Activated naive CD4-positive, alpha-beta T cell treated with anti-CD3 and anti-CD28 coated beads, Interleukin-2, amount 10 ng/mL, durations not matched to agents 7 days and 5 days (primary cell): ENCODE measurements at regions of chr1 and their contacts with region 1.

Region 1: DNA sequence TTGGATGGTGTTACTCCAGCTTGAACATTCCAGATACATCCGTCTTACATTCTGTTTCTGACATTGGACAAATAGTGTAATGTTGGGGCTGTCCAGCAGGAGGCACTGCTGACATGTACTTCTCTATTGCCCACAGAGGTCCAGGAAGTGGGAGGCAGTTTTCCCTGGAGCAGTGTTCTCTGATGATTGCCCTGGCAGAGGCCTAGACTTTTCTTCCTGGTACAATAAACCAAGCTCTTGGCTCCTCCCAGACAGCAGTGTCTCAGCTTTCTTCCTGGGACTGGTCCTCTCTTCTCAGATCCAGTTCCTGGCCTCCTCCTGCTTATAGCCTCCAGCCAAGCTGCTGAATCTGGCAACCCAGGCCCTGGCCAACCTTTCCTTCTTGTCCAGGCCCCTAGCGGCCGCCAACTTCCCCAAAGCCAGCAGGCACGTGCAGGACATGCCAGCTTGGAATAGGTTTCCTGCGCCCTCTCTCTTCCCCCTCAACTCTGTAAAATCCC is 14.9 kb upstream of the IFNLR1 start:
- DNase-seq: peak; percentile 77
- H3K4me3 Mint-ChIP-seq: no peak overlapping the region
- H3K27ac Mint-ChIP-seq: no peak overlapping the region
- H3K4me1 Mint-ChIP-seq: peaks cover 11% of the 10 kb centered on the region
- H3K27me3 Mint-ChIP-seq: peaks cover 27% of the 10 kb centered on the region

Region 2: DNA sequence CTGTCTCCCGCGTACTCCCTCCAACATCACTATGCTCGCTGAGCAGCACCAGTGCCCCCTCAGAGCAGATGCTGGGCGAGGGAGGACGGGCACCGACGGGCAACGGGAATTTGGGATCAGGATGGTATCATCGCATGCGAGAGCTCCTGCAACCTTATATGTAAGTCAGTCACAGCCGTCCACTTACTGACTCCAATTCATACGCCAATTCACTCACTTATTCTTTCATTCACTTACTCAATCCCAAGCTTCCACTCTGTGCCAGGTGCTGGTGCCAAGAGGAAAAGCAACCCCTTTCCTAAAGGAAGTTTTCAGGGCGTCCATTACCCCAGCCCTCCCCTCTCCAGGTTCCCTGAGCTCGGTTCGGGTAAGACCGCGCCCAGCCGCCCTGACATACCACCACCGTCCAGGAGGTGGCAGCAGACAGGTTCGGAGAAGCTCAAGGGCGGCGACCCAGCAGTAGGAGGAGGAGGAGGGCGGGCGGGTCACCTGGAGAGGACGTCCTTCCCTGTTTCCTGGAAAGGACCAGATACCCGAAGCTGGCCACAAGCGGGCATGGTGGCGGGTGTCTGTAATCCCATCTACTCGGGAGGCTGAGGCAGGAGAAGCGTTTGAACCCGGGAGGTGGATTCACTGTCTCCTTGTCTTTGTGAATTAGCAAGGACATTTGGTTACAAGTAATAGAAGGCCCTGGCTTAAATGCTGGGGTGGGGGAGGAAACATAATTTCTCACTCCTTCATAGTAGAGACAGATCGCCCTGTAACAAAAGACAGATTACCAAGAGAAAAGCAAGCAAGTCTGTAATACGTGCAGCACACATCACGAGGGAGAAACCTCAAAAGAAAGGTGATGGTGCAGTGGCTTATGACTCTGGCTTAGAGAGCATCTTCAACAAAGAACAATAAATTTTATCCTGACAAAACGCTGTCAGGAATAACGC is 51.5 kb before region 1 on chr1:
- CTCF ChIA-PET with region 1: interaction called, 85 read pairs
- DNase-seq: peak; percentile 93
- H3K4me3 Mint-ChIP-seq: peak overlapping the region; percentile 10
- H3K27ac Mint-ChIP-seq: no peak overlapping the region
- H3K4me1 Mint-ChIP-seq: peaks cover 19% of the 10 kb centered on the region
- H3K27me3 Mint-ChIP-seq: peaks cover 65% of the 10 kb centered on the region

Region 3: DNA sequence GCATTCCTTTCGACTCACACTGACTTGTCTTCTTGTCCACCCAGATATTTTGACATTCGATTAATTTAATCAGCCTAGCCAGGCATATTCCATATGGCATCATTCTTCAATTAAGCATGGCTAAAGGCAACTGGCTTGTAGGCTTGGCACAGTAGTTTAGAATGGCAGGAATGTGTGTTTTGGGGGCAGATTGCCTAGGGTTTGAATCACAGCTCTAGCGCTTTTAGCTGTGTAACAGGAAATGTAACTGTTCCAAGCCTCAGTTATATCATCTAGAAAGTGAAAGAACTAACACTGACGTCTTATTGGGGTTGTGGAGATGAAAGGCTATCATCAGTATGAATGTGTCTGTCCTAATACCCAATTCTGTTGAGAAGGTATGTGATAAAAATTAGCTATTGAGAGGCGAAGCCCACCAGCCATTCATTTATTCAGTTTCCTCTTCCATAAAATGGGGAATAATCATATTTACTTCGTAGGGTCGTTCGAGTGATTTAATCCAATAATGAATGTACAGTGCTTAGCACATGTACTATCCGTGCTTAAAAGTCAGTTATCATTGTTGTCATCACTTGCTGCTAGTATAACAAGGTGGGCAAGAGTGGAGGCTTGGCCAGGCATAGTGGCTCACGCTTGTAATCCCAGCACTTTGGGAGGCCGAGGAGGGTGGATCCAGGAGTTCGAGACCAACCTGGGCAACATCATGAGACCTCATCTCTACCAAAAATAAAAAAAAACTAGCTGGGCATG is 75.6 kb after region 1 on chr1:
- CTCF ChIA-PET with region 1: interaction called, 11 read pairs
- DNase-seq: no peak
- H3K4me3 Mint-ChIP-seq: no peak overlapping the region
- H3K27ac Mint-ChIP-seq: no peak overlapping the region
- H3K4me1 Mint-ChIP-seq: peaks cover 14% of the 10 kb centered on the region
- H3K27me3 Mint-ChIP-seq: peaks cover 46% of the 10 kb centered on the region

Region 4: DNA sequence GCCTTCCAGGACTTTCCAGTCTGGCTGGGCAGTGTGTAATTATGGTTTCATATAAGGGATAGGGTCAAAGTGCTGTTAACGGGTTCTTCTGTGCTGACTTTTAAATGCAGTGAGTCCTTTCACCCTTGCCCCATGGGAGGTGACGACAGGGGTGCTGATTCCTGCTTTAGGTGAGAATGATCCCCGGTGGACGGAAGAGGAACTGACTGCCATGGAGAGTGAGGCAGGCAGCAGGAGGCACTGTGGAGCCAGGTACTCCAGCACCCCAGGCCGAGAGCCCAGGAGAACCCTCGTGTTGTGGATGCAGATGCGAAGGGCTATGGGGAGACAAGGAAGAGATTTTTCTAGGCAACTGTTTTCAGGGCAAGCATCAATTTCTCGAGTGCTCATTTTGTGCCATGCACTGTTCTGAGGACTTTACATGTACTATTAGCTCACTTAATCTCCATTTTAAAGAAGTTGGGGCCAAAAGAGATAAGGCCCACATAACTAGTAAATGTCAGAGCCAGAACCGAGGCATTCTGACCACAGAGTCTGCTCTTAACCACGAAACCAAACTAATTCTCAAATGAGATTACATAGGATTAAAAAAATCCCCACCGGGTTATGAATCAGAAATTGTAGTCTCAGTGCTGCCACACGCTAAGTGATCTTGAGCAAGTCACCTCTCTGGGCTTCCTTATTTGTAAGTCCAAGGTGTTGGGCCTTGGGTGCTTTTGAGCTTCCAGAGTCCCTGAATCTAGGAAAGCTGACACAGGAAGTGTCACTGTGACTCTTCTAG is 183.4 kb after region 1 on chr1:
- CTCF ChIA-PET with region 1: interaction called, 383 read pairs
- DNase-seq: peak; percentile 50
- H3K4me3 Mint-ChIP-seq: no peak overlapping the region
- H3K27ac Mint-ChIP-seq: peak overlapping the region; percentile 30
- H3K4me1 Mint-ChIP-seq: peaks cover 28% of the 10 kb centered on the region
- H3K27me3 Mint-ChIP-seq: no peaks in the 10 kb centered on the region

Region 5: DNA sequence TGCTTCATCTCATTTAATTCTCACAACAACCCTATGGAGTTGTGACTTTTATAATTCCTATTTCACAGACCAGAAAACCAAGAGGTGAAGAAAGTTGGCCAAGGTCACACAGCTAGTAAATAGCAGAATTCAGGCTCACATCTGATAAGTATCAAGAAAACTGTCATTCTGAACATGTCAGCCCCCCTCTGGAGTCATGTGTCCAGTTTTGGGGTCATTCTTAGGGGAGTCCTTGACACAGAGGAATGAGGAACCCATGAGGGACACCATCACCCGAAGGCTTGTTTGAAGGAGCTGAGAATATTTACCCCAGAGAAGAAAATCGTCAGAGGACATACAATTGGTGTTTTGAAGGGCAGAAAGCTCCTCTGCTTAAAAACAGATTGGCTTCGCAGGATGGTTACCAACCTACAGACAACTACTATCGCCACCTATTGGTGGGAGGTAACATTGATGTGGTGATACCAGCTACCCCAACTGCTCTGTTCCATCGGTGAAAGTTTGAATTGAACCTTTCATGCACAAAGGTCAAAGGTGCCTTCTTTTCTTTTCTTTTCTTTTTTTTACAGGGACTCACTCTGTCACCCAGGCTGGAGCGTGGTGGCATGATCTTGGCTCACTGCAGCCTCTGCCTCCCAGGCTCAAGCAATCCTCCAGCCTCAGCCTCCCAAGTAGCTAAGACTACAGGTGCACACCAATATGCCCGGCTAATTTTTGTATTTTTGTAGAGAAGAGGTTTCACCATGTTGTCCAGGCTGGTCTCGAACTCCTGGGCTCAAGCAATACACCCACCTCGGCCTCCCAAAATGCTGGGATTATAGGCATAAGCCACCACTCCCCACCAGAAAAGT is 385.2 kb after region 1 on chr1:
- CTCF ChIA-PET with region 1: interaction called, 24 read pairs
- DNase-seq: peak; percentile 64
- H3K4me3 Mint-ChIP-seq: no peak overlapping the region
- H3K27ac Mint-ChIP-seq: no peak overlapping the region
- H3K4me1 Mint-ChIP-seq: peaks cover 9% of the 10 kb centered on the region
- H3K27me3 Mint-ChIP-seq: peaks cover 56% of the 10 kb centered on the region